Activated B cell treated with CpG ODN at 0.5 μM for 24 hours (primary cell): ENCODE measurements at regions of chr20 and their contacts with region 1.

Region 1: GRCh38 chr20:1357921-1358671 is 29.2 kb upstream of the SDCBP2 start:
- DNase-seq: no peak
- ATAC-seq: no peak
- H3K4me3 Mint-ChIP-seq: no peak overlapping the region
- H3K27ac Mint-ChIP-seq: no peak overlapping the region
- H3K4me1 Mint-ChIP-seq: peaks cover 7% of the 10 kb centered on the region
- H3K27me3 Mint-ChIP-seq: no peaks in the 10 kb centered on the region
- CTCF ChIP-seq: no peak

Region 2: GRCh38 chr20:1368448-1369199 is 10.5 kb after region 1 on chr20:
- CTCF ChIA-PET with region 1: no interaction called
- POLR2A ChIA-PET with region 1: no interaction called
- intact Hi-C with region 1: loop called (anchors 2 kb)
- DNase-seq: no peak
- ATAC-seq: no peak
- H3K4me3 Mint-ChIP-seq: no peak overlapping the region
- H3K27ac Mint-ChIP-seq: no peak overlapping the region
- H3K4me1 Mint-ChIP-seq: peaks cover 14% of the 10 kb centered on the region
- H3K27me3 Mint-ChIP-seq: no peaks in the 10 kb centered on the region
- CTCF ChIP-seq: no peak

Region 3: GRCh38 chr20:1392823-1393506 is 34.9 kb after region 1 on chr20 and contains the start of gene FKBP1A:
- CTCF ChIA-PET with region 1: no interaction called
- POLR2A ChIA-PET with region 1: no interaction called
- intact Hi-C with region 1: no loop called
- DNase-seq: peak; percentile 90
- ATAC-seq: peak; percentile 85
- H3K4me3 Mint-ChIP-seq: peak within 1 kb of the TSS; percentile 98
- H3K27ac Mint-ChIP-seq: peak within 1 kb of the TSS; percentile 99
- H3K4me1 Mint-ChIP-seq: peaks cover 83% of the 10 kb centered on the region
- H3K27me3 Mint-ChIP-seq: no peaks in the 10 kb centered on the region
- CTCF ChIP-seq: no peak
- total RNA-seq, gene FKBP1A: 128 and 134 TPM in 2 replicates

Region 4: DNA sequence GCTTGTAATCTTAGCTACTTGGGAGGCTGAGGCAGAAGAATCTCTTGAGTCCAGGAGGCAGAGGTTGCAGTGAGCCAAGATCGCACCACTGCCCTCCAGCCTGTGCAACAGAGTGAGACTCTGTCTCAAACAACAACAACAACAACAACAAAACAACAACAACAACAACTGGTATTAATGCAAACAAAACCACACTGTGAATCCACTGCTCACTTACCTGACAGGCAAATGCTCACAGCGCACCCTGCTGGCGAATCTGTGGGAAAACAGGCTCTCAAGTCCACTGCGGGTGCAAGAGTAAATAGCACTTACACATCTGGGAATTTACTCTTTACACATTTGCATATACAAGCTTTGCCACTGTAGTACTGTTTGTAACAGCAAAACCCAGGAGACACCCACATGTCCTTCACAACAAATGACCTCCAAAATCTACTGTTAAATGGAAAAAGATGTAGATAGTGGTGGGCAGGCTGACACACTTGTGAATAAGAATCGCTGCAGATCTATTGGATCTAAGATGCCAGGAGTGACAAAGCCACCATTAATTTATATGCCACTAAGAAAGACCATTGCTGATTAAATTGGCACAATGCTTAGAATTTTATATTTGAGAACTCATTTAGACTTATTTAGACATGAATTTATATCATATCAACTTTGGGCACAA is 79.3 kb after region 1 on chr20:
- CTCF ChIA-PET with region 1: no interaction called
- POLR2A ChIA-PET with region 1: no interaction called
- intact Hi-C with region 1: no loop called
- DNase-seq: peak; percentile 57
- ATAC-seq: peak; percentile 59
- H3K4me3 Mint-ChIP-seq: no peak overlapping the region
- H3K27ac Mint-ChIP-seq: no peak overlapping the region
- H3K4me1 Mint-ChIP-seq: peaks cover 34% of the 10 kb centered on the region
- H3K27me3 Mint-ChIP-seq: no peaks in the 10 kb centered on the region
- CTCF ChIP-seq: peak; percentile 81